Activated B cell treated with CpG ODN at 0.5 μM for 24 hours (primary cell): ENCODE measurements at regions of chr11 and their contacts with region 1.

Region 1: GRCh38 chr11:2092956-2093412 is 46.2 kb downstream of the IGF2 start:
- DNase-seq: no peak
- ATAC-seq: no peak
- H3K4me3 Mint-ChIP-seq: no peak overlapping the region
- H3K27ac Mint-ChIP-seq: no peak overlapping the region
- H3K4me1 Mint-ChIP-seq: no peaks in the 10 kb centered on the region
- H3K27me3 Mint-ChIP-seq: peaks cover 17% of the 10 kb centered on the region
- CTCF ChIP-seq: no peak

Region 2: DNA sequence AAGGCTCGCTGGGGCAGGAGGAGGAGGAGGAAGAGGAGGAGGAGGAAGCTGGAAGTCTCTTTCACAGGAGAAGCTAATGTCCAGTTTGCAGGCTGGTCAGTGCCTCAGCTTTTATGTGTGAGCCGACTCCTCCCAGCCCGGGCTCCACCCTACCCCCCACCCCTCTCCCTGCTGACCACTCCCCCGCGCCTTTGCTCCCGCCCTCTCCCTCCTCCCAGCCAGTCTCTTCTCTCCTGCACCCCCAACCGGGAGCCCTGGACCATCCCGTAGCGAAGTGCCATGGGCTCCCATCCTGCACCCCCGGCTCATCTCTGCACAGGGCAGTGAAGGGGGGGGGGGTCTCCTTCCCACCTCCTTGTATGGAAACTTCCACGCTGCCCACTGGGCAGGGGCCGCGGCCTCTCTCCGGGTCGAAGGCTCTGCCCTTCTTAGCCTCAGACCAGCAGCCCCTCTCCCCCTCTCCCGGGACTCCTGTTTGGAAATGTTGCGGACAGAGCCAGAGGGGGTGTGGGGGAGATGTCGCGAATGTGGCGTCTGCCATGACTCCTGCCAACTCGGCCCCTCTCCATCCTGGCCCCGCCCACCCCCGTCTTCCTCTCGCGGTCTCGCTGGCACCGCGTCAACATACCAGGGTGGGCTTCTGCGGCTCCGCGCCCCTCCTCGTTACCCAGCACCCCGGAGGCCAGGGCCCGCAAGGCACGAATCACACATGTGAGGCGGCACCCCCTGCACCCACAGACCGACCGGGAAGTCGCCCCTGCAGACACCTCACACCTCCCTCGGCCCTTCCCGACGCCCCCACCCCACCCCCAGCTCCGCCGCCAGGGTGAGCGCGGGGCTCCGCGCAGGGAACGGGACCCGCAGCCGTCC is 44.5 kb after region 1 on chr11:
- CTCF ChIA-PET with region 1: no interaction called
- POLR2A ChIA-PET with region 1: no interaction called
- intact Hi-C with region 1: loop called (anchors 5 kb)
- DNase-seq: no peak
- ATAC-seq: no peak
- H3K4me3 Mint-ChIP-seq: peak overlapping the region; percentile 11
- H3K27ac Mint-ChIP-seq: no peak overlapping the region
- H3K4me1 Mint-ChIP-seq: peaks cover 19% of the 10 kb centered on the region
- H3K27me3 Mint-ChIP-seq: peaks cover 51% of the 10 kb centered on the region
- CTCF ChIP-seq: no peak